WTC11 (cell line): ENCODE measurements at regions of chr17 and their contacts with region 1.

Region 1: DNA sequence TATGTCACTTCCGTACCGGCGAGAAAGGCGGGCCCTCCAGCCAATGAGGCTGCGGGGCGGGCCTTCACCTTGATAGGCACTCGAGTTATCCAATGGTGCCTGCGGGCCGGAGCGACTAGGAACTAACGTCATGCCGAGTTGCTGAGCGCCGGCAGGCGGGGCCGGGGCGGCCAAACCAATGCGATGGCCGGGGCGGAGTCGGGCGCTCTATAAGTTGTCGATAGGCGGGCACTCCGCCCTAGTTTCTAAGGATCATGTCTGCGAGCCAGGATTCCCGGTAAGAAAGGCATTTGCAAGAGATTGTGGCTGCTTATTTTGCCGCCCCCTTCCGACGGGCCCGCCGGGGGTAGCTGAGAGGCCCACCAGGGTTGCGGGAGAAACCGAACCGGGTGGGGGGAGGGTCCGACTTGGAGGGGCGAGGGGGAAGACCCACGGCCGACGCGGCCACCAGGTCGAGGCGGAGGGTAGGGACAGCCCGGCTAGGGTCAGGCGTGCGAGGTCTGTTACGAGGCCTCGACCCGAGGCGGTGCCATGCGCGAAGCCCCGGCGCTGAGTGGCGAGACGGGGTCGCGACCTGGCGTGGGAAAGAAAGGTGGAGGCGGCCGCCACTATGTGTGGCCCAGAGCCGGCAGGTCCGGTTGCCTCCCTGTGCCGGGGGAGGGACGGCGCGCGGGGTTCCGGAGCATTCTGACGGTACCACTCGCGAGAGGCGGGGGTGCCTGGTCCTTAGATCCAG is 6.7 kb upstream of the CD68 start:
- DNase-seq: peak; percentile 100
- ATAC-seq: no peak; the same call in 1 of the 2 replicates
- H3K4me3 Mint-ChIP-seq: peak overlapping the region; percentile 93
- H3K27ac Mint-ChIP-seq: peak overlapping the region; percentile 100
- H3K4me1 Mint-ChIP-seq: peaks cover 46% of the 10 kb centered on the region
- H3K27me3 Mint-ChIP-seq: no peaks in the 10 kb centered on the region
- CTCF ChIP-seq: no peak

Region 2: DNA sequence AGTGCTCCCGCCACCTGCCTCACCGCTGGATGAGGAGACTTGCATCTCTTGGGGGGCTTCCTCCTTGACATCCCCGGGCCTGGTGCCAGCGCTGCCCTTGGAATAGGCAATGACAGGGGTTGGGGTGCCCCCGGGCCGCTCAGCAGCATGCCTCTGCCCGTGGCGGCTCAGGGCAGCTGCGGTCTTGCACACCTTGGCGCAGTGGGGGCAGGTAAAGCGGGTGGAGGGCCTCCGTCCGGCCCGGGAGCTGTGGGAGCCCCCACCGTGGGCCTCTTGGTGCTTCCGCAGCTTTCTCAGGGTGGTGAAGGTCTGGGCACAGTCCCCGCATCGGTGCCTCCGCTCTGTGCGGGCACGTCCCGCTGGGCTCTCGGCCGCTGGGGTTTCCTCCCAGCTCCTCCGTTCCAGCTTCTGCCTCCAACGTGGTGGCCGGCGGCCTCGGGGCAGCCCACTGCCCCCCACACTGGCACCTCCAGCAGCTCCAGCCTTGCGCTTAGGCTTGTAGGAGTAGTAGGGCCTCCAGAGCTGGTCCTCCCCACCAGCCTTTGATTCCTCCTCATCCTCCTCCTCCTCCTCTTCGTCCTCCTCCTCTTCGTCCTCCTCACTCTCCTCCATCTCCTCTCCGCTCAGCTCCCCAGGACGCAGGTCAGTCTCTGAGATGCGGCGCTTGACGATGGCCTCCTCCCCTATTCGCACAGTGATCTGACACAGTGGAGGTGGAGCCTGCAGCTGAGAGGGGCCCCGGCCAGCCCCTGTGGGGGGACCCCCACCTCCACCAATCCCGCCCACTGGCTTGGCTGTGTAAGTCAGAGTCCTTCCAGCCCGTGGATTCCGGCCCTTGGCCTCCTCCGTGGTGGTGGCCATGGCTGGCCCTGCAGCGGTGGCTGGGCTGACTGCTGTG is 110.0 kb before region 1 on chr17:
- CTCF ChIA-PET with region 1: no interaction called
- POLR2A ChIA-PET with region 1: no interaction called
- DNase-seq: no peak
- ATAC-seq: no peak
- H3K4me3 Mint-ChIP-seq: no peak overlapping the region
- H3K27ac Mint-ChIP-seq: peak overlapping the region; percentile 41; the same call in 1 of the 2 replicates
- H3K4me1 Mint-ChIP-seq: peaks cover 17% of the 10 kb centered on the region
- H3K27me3 Mint-ChIP-seq: peaks cover 9% of the 10 kb centered on the region
- CTCF ChIP-seq: no peak

Region 3: GRCh38 chr17:7548585-7549400 is 24.0 kb before region 1 on chr17 and contains the start of gene TNFSF12:
- CTCF ChIA-PET with region 1: no interaction called
- POLR2A ChIA-PET with region 1: no interaction called
- DNase-seq: peak; percentile 67
- ATAC-seq: peak; percentile 74
- H3K4me3 Mint-ChIP-seq: peak within 1 kb of the TSS; percentile 77
- H3K27ac Mint-ChIP-seq: peak within 1 kb of the TSS; percentile 37; the same call in 1 of the 2 replicates
- H3K4me1 Mint-ChIP-seq: peaks cover 6% of the 10 kb centered on the region
- H3K27me3 Mint-ChIP-seq: peaks cover 12% of the 10 kb centered on the region
- CTCF ChIP-seq: no peak
- total RNA-seq, gene TNFSF12: 8.1 to 10.5 TPM (median 10.2 TPM) in 3 replicates

Region 4: GRCh38 chr17:7583253-7584109 is 10.7 kb after region 1 on chr17 and contains the start of gene MPDU1:
- CTCF ChIA-PET with region 1: interaction called, 4 read pairs
- POLR2A ChIA-PET with region 1: interaction called, 22 read pairs
- DNase-seq: peak; percentile 96
- ATAC-seq: peak; percentile 26
- H3K4me3 Mint-ChIP-seq: peak within 1 kb of the TSS; percentile 97
- H3K27ac Mint-ChIP-seq: peak within 1 kb of the TSS; percentile 100
- H3K4me1 Mint-ChIP-seq: peaks cover 48% of the 10 kb centered on the region
- H3K27me3 Mint-ChIP-seq: no peaks in the 10 kb centered on the region
- CTCF ChIP-seq: no peak
- total RNA-seq, gene MPDU1: 55.3 to 57.7 TPM (median 57.0 TPM) in 3 replicates